Vagina (tissue), 2 donors: ENCODE measurements at regions of chr12 and their contacts with region 1.

Region 1: DNA sequence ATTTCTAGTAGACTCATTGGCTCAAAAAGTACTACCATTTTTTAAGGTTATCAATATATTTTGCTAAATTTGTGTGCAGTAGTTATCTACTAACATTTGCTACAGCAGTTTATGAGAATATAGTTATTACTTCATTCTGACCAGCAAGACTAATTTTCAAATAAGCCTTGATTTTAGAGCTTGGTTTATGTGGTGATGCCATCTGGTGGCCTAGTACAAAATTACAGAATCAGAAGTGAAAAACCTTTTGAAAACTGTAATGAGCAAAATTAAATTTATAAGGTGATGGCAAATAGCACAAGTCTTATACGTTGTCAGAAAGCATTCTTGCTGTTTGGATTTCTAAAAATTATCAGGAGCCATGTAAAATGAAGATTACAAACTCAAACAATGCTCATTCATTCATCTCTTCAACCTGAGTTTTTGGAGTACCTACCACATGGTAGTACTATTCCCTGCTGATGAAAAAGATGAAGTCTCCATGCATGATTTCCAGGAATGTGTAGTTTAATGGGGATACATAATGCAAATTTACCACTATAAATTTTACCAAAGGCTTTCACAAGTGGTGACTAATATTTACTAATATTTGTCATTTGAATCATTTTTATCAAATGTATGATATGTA is 51.0 kb downstream of the MAGOHB start:
- DNase-seq: no peak
- H3K4me3 ChIP-seq: no peak overlapping the region
- H3K27ac ChIP-seq: no peak overlapping the region
- H3K4me1 ChIP-seq: no peaks in the 10 kb centered on the region
- H3K27me3 ChIP-seq: no peaks in the 10 kb centered on the region
- CTCF ChIP-seq: peak; percentile 69 to 74 (median 70)
- POLR2A ChIP-seq: no peak

Region 2: DNA sequence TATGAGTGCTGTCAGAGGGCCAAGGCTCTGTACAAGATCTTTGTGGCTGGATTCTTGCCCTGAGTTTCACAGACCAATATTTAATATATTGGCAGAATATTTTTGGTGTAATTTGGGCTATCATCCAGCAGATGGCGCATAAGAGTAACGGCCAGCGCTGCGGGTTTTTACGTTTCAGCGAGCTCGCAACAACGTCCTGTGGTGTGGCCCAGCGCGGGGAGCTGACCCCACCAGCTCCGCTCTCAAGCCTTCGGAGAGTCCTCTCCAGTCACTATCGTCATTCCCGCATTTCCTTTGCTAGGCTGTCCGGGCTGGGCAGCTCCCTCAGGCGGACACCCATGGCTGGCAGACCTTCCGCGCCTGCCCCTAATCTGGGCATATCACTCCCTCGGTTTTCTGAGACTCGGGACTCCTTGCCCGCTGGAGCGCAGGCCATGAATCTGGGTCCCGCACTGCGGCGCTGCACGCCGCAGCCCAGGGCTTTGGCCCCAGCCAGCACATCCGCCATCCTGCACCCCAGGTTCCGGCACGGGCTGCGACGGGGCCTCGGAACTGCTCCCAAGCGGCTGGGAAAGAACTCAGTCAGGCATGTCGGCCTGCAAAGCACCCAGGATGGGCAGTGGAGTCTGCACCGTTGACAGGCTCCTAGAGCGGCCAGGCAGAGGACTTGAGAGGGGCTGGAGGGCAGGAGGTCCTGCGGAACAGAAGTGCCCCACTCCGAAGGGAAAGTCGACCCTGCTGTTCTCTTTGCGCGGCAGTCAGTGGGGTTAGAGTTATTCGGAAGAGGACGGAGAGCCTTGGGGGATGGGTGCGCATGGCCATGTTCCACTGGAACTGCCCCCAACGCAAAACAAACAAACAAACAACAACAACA is 408.9 kb before region 1 on chr12:
- intact Hi-C with region 1: loop called (anchors 10 kb)
- DNase-seq: peak in 1 of 2 donors; percentile 88
- H3K4me3 ChIP-seq: peak overlapping the region; percentile 50 to 57
- H3K27ac ChIP-seq: peak overlapping the region; percentile 86
- H3K4me1 ChIP-seq: peaks cover 6% of the 10 kb centered on the region
- H3K27me3 ChIP-seq: no peaks in the 10 kb centered on the region
- CTCF ChIP-seq: peak; percentile 70 to 87 (median 85)
- POLR2A ChIP-seq: no peak

Region 3: DNA sequence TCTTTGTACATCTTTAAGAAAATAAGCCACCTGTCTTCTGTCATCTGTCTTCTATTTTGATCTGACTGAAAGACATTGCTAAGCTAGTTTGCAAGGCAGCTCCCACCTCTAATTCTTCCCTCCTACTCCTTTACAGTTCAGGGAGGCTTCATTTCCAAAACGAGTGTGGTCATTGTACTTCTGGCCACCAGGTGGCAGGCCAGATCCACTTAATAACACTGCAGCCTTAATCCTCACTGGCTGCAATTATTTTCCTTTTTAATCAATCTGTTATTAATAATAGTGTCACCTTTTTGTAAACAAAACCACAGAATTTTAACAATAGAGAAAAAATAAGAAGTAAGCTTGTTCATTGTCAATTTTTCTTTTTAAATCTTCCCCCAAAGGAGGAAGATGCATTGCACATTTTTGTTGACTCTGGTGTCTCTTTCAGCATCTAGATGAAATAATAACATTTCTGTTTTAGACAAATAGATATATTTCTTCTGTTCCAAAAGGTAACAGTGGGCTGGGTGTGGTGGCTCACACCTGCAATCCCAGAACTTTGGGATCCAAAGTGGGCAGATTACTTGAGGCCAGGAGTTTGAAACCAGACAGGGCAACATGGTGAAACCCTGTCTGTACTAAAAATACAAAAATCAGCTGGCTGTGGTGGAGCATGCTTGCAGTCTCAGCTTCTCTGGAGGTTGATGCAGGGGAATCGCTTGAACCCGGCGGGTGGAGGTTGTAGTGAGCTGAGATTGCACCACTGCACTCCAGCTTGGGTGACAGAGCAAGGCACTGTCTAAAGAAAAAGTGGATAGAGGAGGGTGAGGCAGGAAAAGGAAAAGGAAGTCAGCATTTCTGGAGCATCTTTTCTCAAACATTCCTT is 326.4 kb before region 1 on chr12:
- intact Hi-C with region 1: loop called (anchors 5 kb)
- DNase-seq: no peak
- H3K4me3 ChIP-seq: no peak overlapping the region
- H3K27ac ChIP-seq: no peak overlapping the region
- H3K4me1 ChIP-seq: no peaks in the 10 kb centered on the region
- H3K27me3 ChIP-seq: no peaks in the 10 kb centered on the region
- CTCF ChIP-seq: peak; percentile 70 to 81 (median 80)
- POLR2A ChIP-seq: no peak